Activated CD8-positive, alpha-beta T cell treated with anti-CD3 and anti-CD28 coated beads for 36 hours (primary cell): ENCODE measurements at regions of chr2 and their contacts with region 1.

Region 1: DNA sequence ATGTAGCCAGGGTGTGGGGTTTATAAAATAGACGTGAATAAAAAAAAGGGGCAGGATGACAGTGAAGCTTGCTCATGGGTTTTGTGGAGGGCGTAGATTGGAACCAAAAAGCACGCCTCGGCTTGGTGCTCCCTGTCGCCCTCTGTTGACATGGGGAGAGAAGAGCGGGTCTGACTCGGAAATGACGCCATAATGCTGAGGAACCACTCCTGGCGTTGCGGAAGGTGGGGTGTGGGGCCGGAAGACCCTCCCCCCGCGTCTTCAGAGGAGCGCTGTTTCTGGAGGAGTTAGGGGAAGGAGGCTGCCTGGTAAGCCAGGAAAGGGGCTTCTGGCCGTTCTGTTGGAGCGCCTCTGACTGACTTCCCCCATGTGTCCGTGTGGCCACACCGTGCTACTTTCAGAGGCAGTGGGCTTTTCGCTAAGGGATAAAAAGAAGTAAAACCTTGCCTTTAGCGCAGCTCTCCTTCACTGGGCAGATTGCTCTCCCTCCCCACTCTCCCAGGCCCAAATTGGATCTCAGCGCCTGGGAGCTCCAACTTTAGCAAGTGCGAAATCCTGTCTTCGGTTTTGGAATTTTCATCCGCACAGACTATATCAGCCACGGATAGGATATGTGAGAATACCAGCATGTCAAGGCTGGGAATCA is 42.8 kb downstream of the PLEKHA3 start:
- DNase-seq: peak; percentile 88
- ATAC-seq: peak; percentile 98
- H3K4me3 Mint-ChIP-seq: peak overlapping the region; percentile 90
- H3K27ac Mint-ChIP-seq: peak overlapping the region; percentile 90
- H3K4me1 Mint-ChIP-seq: peaks cover 37% of the 10 kb centered on the region
- H3K27me3 Mint-ChIP-seq: no peaks in the 10 kb centered on the region
- CTCF ChIP-seq: peak; percentile 81

Region 2: DNA sequence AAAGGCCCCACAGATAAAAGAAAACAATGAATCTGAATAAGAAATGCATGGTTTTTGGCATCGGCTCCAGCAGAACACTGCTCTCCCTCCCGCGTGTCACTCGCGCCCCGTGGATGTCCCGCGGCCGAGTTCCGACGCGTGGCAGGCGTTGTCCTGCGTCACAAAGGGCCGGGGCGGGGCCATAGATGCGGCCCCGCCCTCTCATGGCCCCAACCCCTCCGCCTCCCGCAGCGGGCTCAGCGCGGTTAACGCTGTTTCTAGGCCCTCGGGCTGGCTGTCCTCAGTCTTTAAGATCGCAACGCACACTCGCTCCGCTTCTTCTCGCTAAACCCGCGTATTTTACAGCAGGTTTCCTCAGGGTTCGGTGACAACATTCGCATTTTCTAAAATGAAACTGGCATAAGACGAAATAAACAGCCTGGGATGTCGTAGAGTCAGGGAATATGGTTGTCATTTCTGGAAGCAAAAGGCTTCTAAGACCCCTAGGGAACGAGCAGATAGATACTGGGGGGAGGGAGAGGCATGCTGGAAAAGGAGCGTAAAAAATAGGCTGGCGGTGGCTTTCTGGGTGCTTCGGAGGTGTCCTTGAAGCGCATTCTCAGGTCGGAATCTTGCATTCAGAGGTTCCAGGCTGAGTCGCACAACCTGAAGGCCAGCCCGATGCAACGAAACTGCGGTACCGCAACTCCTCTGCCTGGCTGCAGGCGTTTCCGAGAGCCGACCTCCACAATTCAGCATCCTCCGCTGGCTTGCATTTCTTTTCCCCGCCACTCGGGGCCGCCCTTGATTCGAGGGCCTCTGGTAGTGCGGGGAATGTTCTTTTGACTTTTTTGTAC is 44.4 kb before region 1 on chr2 and contains the start of gene FKBP7:
- CTCF ChIA-PET with region 1: interaction called, 6 read pairs
- POLR2A ChIA-PET with region 1: interaction called, 4 read pairs
- intact Hi-C with region 1: loop called (anchors 2 kb)
- DNase-seq: peak; percentile 84
- ATAC-seq: peak; percentile 72
- H3K4me3 Mint-ChIP-seq: peak within 1 kb of the TSS; percentile 83
- H3K27ac Mint-ChIP-seq: peak within 1 kb of the TSS; percentile 95
- H3K4me1 Mint-ChIP-seq: peaks cover 33% of the 10 kb centered on the region
- H3K27me3 Mint-ChIP-seq: no peaks in the 10 kb centered on the region
- CTCF ChIP-seq: peak; percentile 96
- total RNA-seq, gene FKBP7: 2.1 to 3.0 TPM